ENCODE measurements at regions of chr6 and their contacts with region 1.

Region 1: GRCh38 chr6:33288921-33289748 is at the starts of genes PFDN6 and WDR46:
- DNase-seq: peak; percentile 78 to 85
- H3K4me3 ChIP-seq: peak within 1 kb of the TSS; percentile 93
- H3K27ac ChIP-seq: peak within 1 kb of the TSS; percentile 7; the same call in 1 of the 2 replicates
- H3K4me1 ChIP-seq: peaks cover 12% of the 10 kb centered on the region
- H3K27me3 ChIP-seq: no peaks in the 10 kb centered on the region
- CTCF ChIP-seq: no peak
- total RNA-seq, gene PFDN6: 51.5 and 57.2 TPM in 2 replicates
- total RNA-seq, gene WDR46: 52.4 and 59.6 TPM in 2 replicates

Region 2: DNA sequence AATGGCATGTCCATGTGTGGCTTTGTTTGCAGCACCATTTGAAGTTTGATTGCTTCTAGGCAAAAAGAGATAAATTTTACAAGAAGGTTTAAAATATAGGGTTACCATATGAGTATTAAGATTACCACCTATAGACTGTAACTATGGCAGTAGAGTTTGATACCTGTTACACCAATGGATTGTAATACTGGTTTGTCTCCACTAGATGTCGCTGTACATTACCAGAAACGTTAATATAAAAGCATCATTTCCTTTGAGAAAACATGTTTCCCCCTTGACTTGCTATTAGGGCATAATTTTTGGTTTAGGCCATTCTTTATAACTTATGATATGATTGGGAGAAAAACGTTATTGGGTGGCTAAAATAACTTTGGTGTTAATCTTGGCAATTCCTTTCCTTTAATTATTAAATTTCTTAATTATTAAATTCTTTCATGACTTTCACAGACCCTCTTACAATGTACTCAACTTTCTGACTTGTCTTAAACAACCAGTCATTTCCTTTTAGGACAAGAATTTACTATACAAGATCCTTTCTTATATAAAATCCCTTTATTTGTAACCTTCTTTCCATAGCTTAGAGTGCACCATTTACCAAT is 170.5 kb before region 1 on chr6:
- CTCF ChIA-PET with region 1: interaction called, 12 read pairs
- POLR2A ChIA-PET with region 1: no interaction called
- intact Hi-C with region 1: no loop called
- DNase-seq: no peak
- H3K4me3 ChIP-seq: no peak overlapping the region
- H3K27ac ChIP-seq: no peak overlapping the region
- H3K4me1 ChIP-seq: no peaks in the 10 kb centered on the region
- H3K27me3 ChIP-seq: peaks cover 76% of the 10 kb centered on the region
- CTCF ChIP-seq: peak; percentile 93

Region 3: DNA sequence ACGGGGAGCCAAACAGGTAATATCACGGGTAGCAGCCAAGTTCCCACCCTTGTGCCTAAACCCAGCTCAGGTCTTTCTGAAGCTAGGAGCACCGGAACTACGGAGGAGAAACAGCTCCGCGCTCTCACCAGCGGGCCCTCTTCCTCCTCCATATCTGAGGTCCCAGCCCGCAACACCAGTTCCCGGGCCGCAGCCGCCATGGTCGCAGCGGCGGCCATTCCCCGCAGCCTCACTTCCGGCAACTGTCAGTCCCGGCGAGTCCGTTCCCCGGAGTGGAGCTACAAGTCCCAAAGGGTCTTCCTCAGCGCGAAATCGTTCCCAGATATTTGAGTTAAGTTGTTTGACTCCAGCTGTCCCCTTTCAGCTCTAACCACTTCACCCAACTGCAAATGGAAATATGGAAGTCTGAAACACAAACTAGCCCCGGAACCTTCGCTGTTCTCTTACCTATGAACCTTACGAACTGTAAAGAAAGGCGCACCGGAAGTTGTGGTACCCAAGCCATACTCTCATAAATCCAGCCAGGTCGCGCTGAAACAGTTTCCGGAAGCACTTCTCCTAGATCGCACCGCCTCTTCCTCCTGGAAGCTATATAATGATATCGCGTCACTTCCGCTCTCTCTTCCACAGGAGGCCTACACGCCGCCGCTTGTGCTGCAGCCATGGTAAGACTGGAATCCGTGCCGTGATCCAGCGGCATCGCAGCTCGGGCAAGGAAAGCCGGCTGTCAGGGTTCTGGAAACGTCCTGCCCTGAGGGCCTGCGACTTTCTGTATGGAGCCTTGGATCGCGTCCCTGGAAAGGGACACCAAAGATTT is 17.5 kb before region 1 on chr6 and contains the starts of genes RPS18 and VPS52:
- CTCF ChIA-PET with region 1: interaction called, 5 read pairs
- POLR2A ChIA-PET with region 1: interaction called, 13 read pairs
- intact Hi-C with region 1: no loop called
- DNase-seq: peak; percentile 88 to 94
- H3K4me3 ChIP-seq: peak within 1 kb of the TSS; percentile 70
- H3K27ac ChIP-seq: peak within 1 kb of the TSS; percentile 79
- H3K4me1 ChIP-seq: peaks cover 39% of the 10 kb centered on the region
- H3K27me3 ChIP-seq: no peaks in the 10 kb centered on the region
- CTCF ChIP-seq: no peak
- total RNA-seq, gene RPS18: 2,057 and 2,442 TPM in 2 replicates
- total RNA-seq, gene VPS52: 46.2 and 48.3 TPM in 2 replicates

Region 4: DNA sequence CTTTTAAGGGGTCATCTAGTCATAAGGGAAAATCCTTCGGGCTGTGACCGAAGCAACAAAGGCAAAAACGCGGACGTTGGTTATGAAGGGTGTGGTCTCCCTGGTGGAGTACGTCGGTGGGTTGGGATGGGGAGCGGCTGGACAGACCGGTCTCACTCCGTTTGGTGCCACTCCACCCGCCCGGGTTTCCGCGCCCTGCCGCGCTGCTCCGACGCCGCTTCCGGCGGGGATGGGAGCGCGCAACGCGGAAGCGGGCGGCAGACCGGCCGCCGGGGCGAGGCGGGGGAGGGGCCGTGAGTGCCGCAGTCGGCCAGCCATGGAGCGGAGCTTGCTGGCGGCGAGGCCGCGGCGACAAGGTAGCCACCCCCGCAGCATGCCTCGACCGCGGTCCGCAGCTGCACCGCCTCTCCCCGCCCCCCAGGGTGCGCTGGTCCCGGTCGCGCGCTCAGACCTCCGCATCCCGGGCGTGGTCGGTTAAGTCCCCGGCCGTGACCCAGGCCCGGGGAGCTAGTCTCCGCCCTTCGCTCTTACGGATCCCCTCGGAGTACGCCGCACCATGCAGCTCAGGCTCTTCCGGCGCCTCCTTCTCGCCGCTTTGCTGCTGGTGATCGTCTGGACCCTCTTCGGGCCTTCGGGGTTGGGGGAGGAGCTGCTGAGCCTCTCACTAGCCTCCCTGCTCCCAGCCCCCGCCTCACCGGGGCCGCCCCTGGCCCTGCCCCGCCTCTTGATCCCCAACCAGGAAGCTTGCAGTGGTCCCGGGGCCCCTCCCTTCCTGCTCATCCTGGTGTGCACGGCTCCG is 12.1 kb before region 1 on chr6 and contains the start of gene B3GALT4:
- CTCF ChIA-PET with region 1: interaction called, 5 read pairs
- POLR2A ChIA-PET with region 1: interaction called, 13 read pairs
- intact Hi-C with region 1: no loop called
- DNase-seq: peak; percentile 92 to 93
- H3K4me3 ChIP-seq: peak within 1 kb of the TSS; percentile 70; the same call in 1 of the 2 replicates
- H3K27ac ChIP-seq: peak within 1 kb of the TSS; percentile 79
- H3K4me1 ChIP-seq: peaks cover 36% of the 10 kb centered on the region
- H3K27me3 ChIP-seq: no peaks in the 10 kb centered on the region
- CTCF ChIP-seq: peak; percentile 63
- total RNA-seq, gene B3GALT4: 10.3 and 12.8 TPM in 2 replicates

Region 5: DNA sequence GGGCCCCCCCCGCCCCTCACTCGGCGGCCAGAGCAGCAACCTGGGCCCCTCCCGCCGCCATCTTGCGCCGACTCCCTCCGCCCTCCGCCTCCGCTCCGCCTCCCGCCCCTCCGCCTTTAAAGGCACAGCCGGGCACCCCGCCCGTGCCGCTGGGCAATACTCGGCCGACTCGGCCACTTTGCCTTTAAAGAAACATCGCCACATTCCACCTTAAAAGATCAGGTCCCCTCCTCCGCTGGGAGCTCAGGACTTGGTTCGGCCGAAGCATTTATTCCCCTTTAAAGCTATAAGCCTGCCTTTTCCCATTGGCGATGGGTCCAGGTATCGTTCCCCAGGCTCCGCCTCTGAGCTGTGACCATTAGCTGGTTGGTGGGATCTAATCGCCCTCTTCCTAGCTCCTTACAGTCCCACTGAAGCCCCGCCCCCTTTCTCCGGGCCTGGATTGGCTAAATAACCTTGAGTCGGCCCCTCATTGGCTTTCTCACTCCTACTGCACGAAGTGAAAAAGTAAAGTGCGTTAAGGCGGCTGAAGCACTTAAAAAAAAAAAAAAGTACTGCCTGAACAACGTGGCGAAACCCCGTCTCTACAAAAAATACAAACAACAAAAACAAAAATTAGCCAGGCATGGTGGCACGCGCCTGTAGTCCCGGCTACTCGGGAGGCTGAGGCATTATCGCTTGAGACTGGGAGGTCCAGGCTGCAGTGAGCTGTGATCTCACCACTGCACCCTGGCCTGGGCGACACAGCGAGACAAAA is 28.7 kb after region 1 on chr6 and contains the start of gene ZBTB22:
- CTCF ChIA-PET with region 1: interaction called, 3 read pairs
- POLR2A ChIA-PET with region 1: interaction called, 13 read pairs
- intact Hi-C with region 1: no loop called
- DNase-seq: peak; percentile 97 to 98
- H3K4me3 ChIP-seq: peak within 1 kb of the TSS; percentile 49
- H3K27ac ChIP-seq: peak within 1 kb of the TSS; percentile 66
- H3K4me1 ChIP-seq: peaks cover 51% of the 10 kb centered on the region
- H3K27me3 ChIP-seq: no peaks in the 10 kb centered on the region
- CTCF ChIP-seq: no peak
- total RNA-seq, gene ZBTB22: 16.5 and 20.8 TPM in 2 replicates

Region 6: DNA sequence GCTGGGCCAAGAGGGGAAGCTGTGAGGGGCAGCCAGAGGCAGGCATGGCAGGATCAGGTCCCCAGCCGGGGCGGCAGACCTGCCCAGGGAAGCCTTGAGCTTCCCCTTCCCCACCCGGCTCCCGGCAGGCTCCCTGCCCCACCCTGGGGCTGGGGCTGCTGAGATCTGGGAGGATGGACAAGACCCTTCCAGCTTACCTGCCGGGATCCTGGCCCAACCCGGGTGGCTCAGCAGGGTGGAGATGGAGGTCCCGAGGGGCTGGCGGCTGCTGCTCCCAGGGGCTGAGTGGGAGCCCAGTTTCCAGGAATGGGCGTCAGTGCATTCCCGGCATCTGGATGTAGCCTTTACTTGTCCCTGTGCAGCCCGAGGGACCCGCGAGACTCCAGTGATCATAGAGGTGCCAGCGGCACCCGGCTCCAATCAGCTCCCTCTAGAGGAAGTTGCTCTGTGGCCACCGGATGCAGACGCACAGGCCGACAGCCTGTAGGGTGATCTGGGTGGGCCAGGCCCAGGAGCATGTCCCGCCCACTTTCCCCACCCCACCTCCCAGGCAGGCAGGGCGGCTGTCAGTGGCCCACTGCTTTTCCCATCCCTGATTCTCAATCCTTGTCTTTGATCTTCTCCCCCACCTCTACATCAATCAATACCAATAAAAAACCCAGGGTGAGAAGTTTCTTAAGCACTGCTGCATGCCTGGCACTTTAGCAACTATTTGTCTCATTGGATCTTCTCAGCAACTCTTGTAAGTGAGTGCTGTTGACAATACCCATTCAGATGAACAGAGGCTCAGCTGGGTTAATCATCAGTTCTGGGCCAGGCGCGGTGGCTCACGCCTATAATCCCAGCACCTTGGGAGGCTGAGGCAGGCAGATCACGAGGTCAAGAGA is 290.9 kb after region 1 on chr6 and contains the start of gene BAK1:
- CTCF ChIA-PET with region 1: no interaction called
- POLR2A ChIA-PET with region 1: no interaction called
- intact Hi-C with region 1: loop called (anchors 10 kb)
- DNase-seq: peak; percentile 84 to 87
- H3K4me3 ChIP-seq: peak within 1 kb of the TSS; percentile 98
- H3K27ac ChIP-seq: no peak within 1 kb of the TSS
- H3K4me1 ChIP-seq: peaks cover 15% of the 10 kb centered on the region
- H3K27me3 ChIP-seq: no peaks in the 10 kb centered on the region
- CTCF ChIP-seq: peak; percentile 59
- total RNA-seq, gene BAK1: 24.6 and 28.4 TPM in 2 replicates